Common myeloid progenitor, CD34-positive (primary cell): ENCODE measurements at regions of chr18 and their contacts with region 1.

Region 1: DNA sequence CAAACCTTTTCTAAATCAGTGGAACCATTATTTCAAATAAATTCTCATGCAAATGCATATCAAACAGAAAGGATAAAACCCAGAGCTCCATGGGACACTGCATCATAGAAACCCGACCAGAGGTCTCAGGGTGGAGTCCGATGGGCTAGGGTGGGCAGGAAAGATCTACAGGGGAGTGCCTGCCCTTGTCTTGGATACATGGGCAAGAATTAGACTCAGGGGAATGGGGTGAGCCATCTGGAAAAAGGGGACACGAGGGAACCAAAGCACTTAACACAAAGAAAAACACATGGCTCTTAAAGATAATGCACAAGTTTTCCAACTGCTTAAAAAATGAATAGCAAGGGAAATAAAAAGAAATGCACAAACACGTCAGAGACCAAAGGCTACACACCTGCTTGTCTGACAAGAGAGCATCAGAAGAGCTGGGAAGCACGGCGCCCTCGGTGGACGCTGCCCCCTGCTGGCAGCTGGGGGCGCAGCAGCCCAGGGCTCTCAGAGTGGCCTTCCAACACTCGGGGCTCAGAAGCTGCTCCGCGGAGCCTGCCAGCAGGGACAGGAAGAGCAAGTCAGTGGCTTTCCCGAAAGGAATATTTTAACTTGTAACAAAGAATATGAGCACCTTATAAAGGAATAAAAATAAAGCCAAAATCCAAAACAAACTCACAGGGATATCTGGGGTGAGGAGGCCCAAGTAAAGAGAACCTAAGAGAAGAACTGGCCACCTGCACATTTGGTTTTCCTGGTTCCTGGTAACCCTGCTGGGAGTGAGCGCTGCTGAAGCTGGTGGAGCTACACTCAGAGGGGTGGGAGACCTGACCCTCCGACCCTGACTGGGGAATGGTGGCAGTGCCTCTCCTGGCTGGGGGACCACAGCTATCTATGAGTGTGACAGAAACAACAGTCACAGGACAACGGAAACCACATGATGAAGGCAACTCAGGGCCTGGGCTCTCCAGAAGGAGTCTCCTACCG is 54.5 kb downstream of the SIGLEC15 start:
- DNase-seq: peak; percentile 54 to 74 (median 68)
- H3K4me3 ChIP-seq: no peak overlapping the region
- H3K27ac ChIP-seq: no peak overlapping the region
- H3K4me1 ChIP-seq: peaks cover 0 to 3% (median 0%) of the 10 kb centered on the region in 4 experiments
- H3K27me3 ChIP-seq: no peaks in the 10 kb centered on the region

Region 2: DNA sequence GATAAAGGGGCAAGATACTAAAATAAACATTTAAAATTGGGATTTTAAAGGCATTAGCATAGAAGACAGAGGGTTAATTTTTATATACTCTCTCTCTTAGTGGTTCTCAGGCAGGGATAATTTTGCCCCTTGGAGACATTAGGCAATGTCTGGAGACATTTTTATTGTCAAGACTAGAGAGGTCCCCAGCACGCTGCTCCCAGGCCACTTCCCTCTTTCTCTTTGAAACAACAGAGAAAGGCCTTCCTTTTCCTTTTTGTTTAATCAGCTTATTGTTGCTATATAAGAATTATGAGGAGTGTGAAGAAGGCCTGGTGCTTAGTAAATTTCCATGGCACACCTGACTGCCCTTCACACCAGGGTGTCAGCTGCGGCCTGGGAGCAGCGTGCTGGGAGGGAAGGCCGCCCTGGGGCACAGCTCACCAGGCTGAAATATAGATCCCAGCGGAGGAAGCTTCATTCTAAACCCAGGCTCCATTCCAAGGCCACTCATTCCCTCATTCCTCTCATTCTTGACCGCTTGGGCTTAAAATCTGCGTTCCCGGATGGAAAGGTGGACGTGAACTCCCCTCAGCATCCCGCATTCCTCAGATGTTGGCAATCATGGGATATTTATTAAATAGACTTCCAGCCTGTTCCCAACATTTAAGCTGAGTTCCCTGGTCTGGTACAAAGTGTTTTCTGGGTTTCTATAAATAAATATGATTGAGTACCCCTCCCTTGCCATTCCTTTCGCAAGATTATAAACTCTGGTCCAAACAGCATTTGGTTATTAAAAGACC is 242.2 kb before region 1 on chr18:
- CTCF ChIA-PET with region 1: no interaction called
- POLR2A ChIA-PET with region 1: no interaction called
- DNase-seq: peak in 2 of 3 donors; percentile 15 to 19
- H3K4me3 ChIP-seq: no peak overlapping the region
- H3K27ac ChIP-seq: no peak overlapping the region
- H3K4me1 ChIP-seq: peaks cover 0 to 10% (median 2%) of the 10 kb centered on the region in 4 experiments
- H3K27me3 ChIP-seq: no peaks in the 10 kb centered on the region

Region 3: DNA sequence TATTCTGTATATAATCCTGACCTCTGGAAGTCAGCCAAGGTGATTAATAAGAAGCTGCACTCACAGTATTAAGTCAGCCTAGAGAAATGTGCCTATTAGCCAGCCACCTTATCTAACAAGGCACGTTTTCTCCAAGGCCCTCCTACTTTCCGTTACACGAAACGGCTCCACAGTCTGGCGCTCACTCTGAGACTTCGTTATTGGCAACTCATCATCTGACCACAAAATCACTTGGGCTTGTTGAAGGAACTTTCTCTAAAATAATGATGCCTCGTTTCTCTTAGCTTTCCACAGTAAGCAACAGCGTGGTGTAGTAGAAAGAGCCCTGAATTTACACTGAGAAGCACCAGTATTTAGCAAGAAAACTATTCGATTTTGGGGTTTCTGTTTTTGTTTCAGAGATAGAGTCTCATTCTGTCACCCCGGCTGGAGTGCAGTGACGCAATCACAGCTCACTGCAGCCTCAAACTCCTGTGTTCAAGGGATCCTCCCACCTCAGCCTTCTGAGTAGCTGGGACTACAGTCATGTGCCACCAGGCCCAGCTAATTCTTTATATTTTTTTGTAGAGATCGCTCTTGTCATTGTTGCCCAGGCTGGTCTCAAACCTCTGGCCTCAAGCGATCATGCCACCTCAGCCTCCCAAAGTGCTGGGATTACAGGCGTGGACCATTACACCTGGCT is 209.5 kb before region 1 on chr18:
- CTCF ChIA-PET with region 1: interaction called, 176 read pairs
- POLR2A ChIA-PET with region 1: interaction called, 3 read pairs
- DNase-seq: peak; percentile 89 to 98 (median 96)
- H3K4me3 ChIP-seq: peak overlapping the region in 2 of 7 experiments; percentile 13 to 39
- H3K27ac ChIP-seq: peak overlapping the region; percentile 55 to 58
- H3K4me1 ChIP-seq: peaks cover 25 to 63% (median 50%) of the 10 kb centered on the region in 4 experiments
- H3K27me3 ChIP-seq: no peaks in the 10 kb centered on the region

Region 4: GRCh38 chr18:45722899-45723298 is 157.1 kb before region 1 on chr18:
- CTCF ChIA-PET with region 1: interaction called, 22 read pairs
- POLR2A ChIA-PET with region 1: no interaction called
- DNase-seq: peak; percentile 86 to 91 (median 89)
- H3K4me3 ChIP-seq: no peak overlapping the region
- H3K27ac ChIP-seq: no peak overlapping the region
- H3K4me1 ChIP-seq: peaks cover 0 to 3% (median under 1%) of the 10 kb centered on the region in 4 experiments
- H3K27me3 ChIP-seq: no peaks in the 10 kb centered on the region

Region 5: GRCh38 chr18:45856531-45856930 is 23.4 kb before region 1 on chr18:
- CTCF ChIA-PET with region 1: interaction called, 20 read pairs
- POLR2A ChIA-PET with region 1: no interaction called
- DNase-seq: no peak
- H3K4me3 ChIP-seq: no peak overlapping the region
- H3K27ac ChIP-seq: no peak overlapping the region
- H3K4me1 ChIP-seq: no peaks in the 10 kb centered on the region
- H3K27me3 ChIP-seq: no peaks in the 10 kb centered on the region

Region 6: GRCh38 chr18:45896991-45897390 is 17.0 kb after region 1 on chr18:
- CTCF ChIA-PET with region 1: interaction called, 15 read pairs
- POLR2A ChIA-PET with region 1: interaction called, 5 read pairs
- DNase-seq: no peak
- H3K4me3 ChIP-seq: no peak overlapping the region
- H3K27ac ChIP-seq: no peak overlapping the region
- H3K4me1 ChIP-seq: no peaks in the 10 kb centered on the region
- H3K27me3 ChIP-seq: no peaks in the 10 kb centered on the region

Region 7: GRCh38 chr18:45945669-45946068 is 65.7 kb after region 1 on chr18:
- CTCF ChIA-PET with region 1: no interaction called
- POLR2A ChIA-PET with region 1: no interaction called
- DNase-seq: no peak
- H3K4me3 ChIP-seq: no peak overlapping the region
- H3K27ac ChIP-seq: no peak overlapping the region
- H3K4me1 ChIP-seq: no peaks in the 10 kb centered on the region
- H3K27me3 ChIP-seq: no peaks in the 10 kb centered on the region

Region 8: DNA sequence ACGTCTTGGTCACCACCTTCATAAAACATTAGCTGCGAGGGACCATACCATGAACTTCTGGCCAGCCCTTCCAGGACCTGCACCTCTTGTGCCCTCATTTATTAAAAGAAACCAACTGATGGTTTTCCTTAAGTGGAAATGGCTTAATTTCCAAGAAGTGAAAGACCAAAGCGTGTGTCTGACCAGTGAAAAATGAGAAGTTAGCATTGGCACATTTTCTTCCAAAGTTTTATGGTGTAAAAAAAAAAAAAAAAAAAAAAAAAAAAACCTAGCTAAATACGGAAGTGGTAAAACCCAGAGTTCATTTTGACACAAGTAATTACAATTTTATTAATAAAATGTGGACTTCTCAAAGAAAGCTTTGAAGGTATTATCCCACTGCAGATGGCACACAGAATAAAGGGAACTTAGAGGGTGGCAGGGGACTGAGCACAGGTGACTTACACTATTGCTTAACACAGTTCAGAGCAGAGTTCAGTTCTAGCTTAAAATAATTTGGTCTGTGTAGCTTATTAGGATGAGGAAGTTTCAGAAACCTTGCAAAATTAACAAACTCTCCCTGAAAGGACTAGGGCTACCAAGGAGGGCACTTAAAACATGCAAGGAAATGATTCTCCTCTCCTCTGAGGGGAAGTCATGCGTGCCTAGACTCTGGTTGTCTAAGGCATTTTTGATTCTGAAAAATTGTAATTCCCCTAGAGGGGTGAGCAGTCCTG is 129.3 kb after region 1 on chr18:
- CTCF ChIA-PET with region 1: no interaction called
- POLR2A ChIA-PET with region 1: no interaction called
- DNase-seq: peak; percentile 20 to 76 (median 68)
- H3K4me3 ChIP-seq: peak overlapping the region in 2 of 7 experiments; percentile 20 to 30
- H3K27ac ChIP-seq: no peak overlapping the region
- H3K4me1 ChIP-seq: peaks cover 13 to 41% (median 33%) of the 10 kb centered on the region in 4 experiments
- H3K27me3 ChIP-seq: no peaks in the 10 kb centered on the region